ENCODE measurements at regions of chr18 and their contacts with region 1.

Region 1: DNA sequence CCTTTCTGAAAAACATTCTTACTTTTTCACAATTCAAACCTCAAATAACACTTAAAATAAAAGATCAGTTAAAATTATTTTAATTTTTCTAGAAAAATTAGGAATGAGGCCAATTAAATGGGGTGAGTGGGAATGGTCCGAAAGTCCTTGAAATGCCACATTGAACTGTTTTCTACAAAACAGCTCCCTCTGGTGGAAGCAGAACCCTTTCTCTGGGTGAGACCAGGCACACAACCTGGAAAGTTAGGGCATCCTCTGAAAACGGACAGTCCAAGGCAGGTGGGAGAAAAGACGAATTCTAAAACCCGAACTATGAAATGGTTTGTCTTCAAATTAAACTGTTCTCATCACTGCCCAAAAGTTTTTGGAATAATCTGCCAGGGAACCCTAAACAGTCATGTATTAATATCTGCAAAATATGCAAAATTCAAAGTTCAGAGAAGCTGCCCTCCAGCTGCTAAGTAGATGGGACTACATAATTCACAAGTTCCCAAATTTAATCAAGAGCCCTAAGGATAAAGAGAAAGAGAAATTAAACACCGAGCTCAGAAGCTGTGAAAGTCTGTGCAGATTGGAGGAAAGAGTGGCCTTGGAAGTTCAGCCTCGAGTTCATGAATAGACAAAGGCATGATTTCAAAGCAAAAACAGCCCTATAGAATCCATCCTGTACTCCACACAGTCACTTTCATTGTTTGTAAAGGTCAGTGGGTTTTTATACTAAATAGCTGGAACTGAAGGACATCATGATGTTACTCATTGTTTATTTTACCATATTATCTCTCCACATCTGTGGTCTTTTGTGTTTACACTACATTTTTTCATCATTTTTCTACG is 108.3 kb downstream of the PIEZO2 start:
- DNase-seq: peak in 3 of 10 donors; percentile 28 to 63 (median 46)

Region 2: DNA sequence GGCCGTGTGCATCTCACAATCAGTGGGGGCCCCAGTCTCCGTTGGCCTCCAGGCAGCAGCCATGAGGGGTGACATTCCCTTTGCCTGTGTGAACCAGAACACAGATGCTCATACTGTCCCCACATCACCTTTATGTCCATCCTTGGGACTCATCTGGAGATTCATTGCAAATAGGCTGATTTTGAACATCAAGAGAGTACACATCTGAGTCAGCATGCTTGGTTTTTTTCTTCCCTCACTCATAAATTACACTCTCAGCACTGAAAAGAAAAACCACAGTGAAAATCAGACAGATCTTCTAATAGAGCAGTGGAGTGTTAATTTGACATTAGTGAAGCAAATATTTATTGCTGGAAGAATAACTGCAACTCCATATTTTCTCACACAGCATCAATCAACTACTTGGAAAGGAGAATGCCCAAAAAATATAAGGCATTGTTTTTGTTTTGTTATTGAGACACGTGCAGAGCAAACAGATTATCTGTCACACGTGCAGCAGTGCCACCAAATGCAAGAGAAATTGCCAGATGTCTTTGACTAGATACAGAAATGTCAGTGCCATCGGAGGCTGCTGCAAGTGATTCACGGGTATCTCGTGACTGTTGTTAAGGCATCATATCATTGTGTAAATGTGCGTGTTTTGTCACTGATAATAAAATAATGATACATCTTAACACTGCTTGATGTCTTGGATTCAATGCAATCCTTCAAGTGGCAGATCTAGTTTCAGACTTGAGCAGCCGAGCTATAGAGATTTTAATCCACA is 575.7 kb before region 1 on chr18:
- intact Hi-C with region 1: no loop called
- DNase-seq: no peak

Region 3: DNA sequence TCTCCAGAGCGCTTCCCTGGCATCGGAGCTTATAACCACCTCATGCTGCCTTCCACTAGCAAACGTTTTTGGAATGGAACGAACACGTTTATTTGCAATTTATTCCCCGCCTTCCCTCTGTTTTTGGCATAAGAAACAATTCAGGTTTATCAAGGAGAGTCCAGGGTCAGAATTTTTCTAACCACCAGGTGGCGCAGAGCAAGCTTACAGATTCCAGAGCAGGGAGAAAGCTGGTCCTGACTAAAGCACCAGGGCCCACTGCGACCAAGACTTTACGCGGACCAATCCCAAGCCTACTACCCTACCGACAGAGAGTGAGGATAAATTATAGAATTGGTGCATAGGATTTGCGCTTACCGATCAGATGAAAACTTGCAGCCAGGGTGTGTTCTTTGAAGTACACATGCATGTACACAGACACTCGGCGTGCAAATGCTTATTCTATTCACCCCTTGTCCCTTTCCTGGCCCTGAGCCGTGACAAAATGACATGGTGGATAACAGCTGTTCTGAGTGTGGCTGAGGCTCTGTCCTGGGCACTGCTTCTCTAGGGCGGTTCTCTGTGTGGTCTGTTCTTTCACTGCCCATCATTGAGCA is 480.5 kb before region 1 on chr18:
- intact Hi-C with region 1: loop called (anchors 5 kb)
- DNase-seq: peak; percentile 40 to 95 (median 78)

Region 4: DNA sequence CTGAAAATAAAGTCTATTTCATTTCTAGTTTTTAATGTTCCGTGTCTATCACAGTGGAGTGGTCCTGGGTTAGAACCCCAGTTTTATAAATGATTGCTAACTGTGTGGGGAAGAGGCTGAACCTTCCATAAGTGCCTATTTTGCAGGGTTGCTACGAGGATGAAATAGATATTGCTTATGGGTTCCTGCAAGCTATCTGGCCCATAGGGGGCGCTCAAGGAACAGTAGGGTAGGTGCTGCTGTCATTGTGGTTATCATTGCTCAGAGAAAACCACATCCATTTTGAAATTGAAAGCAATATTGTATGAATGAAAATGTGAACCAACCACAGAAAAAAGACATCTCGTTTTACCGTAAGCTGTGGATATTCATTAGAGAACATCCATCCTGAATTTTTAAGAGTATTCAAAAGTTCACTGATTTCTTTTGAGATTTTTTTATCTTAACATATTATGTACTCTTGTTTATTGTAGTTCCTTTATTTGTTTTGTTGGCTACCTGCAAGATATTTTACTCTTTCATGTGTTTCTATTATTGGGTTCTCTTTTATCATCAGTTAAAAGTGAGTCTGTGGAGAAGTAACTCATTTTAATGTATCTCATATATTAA is 253.6 kb before region 1 on chr18:
- intact Hi-C with region 1: loop called (anchors 10 kb)
- DNase-seq: peak in 7 of 10 donors; percentile 26 to 93 (median 75)

Region 5: DNA sequence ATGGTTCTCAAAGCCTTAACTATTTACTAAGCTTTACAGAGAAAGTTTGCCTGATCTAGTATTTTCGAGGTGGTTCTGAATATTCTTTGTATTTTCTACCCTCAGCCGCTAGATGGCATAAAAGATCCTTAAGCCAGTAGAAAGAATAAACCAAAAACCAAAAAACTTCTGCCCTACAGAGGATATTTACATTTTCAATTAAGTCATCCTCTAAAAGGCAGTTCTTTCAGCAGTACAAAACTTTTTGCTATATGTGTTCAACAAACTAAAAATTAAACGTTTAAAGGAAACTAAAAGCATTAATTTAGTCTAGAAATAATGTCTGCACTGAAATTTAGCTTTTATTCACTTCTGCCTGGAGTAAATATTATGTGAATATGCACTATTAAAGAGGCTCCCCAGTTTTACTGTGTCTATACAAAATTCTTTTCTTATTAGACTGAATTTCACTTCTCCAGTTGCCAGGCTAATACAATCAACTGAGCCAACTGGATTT is 189.2 kb before region 1 on chr18:
- intact Hi-C with region 1: loop called (anchors 2 kb)
- DNase-seq: no peak

Region 6: GRCh38 chr18:11149441-11150270 is 108.6 kb after region 1 on chr18 and contains the start of gene PIEZO2:
- intact Hi-C with region 1: loop called (anchors 5 kb)
- DNase-seq: peak; percentile 45 to 97 (median 72)

Region 7: GRCh38 chr18:11204020-11204419 is 163.0 kb after region 1 on chr18:
- intact Hi-C with region 1: no loop called
- DNase-seq: no peak